A549 (cell line): ENCODE measurements at regions of chr17 and their contacts with region 1.

Region 1: GRCh38 chr17:15157051-15157450 is 108.1 kb downstream of the PMP22 start:
- DNase-seq: no peak
- ATAC-seq: no peak
- H3K4me3 ChIP-seq: no peak overlapping the region
- H3K27ac ChIP-seq: no peak overlapping the region
- H3K4me1 ChIP-seq: no peaks in the 10 kb centered on the region
- CTCF ChIP-seq: no peak
- EP300 ChIP-seq: no peak
- POLR2A ChIP-seq: no peak
- RAD21 ChIP-seq: no peak

Region 2: DNA sequence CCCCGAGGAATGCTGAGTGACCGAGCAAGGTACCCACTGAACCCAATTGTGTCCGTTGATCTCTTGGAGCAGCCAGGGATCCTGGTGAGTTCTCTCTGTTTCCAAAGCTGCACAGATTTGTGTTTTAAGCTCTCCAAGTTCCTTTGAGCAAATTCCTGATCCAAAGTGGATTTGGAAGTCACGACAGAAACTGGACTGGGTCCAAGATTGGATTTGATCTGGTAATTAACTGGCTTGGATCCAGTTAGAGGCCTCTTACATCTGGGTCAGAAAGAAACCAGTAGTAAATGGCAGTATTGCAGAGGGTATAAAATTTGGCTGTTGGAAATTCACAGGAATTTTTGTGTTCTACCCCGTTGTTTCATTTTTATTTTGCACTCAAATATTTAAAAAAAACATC is 11.4 kb before region 1 on chr17:
- CTCF ChIA-PET with region 1: interaction called, 15 read pairs
- POLR2A ChIA-PET with region 1: no interaction called
- DNase-seq: no peak
- ATAC-seq: no peak
- H3K4me3 ChIP-seq: no peak overlapping the region
- H3K27ac ChIP-seq: no peak overlapping the region
- H3K4me1 ChIP-seq: no peaks in the 10 kb centered on the region
- CTCF ChIP-seq: no peak
- EP300 ChIP-seq: no peak
- POLR2A ChIP-seq: no peak
- RAD21 ChIP-seq: no peak

Region 3: GRCh38 chr17:15171167-15172047 is 14.4 kb after region 1 on chr17:
- CTCF ChIA-PET with region 1: interaction called, 38 read pairs
- POLR2A ChIA-PET with region 1: no interaction called
- DNase-seq: peak; percentile 62 to 75
- ATAC-seq: peak; percentile 89 to 98
- H3K4me3 ChIP-seq: no peak overlapping the region
- H3K27ac ChIP-seq: no peak overlapping the region
- H3K4me1 ChIP-seq: no peaks in the 10 kb centered on the region
- CTCF ChIP-seq: peak; percentile 68
- EP300 ChIP-seq: no peak
- POLR2A ChIP-seq: no peak
- RAD21 ChIP-seq: peak; percentile 73 to 88

Region 4: GRCh38 chr17:15257258-15257788 is 100.3 kb after region 1 on chr17:
- CTCF ChIA-PET with region 1: no interaction called
- POLR2A ChIA-PET with region 1: no interaction called
- DNase-seq: peak; percentile 74 to 82
- ATAC-seq: peak; percentile 8 to 37; a peak in 4 of 6 replicates
- H3K4me3 ChIP-seq: no peak overlapping the region
- H3K27ac ChIP-seq: peak overlapping the region in 1 of 2 experiments; percentile 12; a peak in 1 of 6 replicates
- H3K4me1 ChIP-seq: peaks cover 12% of the 10 kb centered on the region; the same call in 2 of the 3 replicates
- CTCF ChIP-seq: peak; percentile 97
- EP300 ChIP-seq: no peak
- POLR2A ChIP-seq: no peak
- RAD21 ChIP-seq: peak; percentile 78 to 81